BJ (cell line): ENCODE measurements at regions of chr4 and their contacts with region 1.

Region 1: DNA sequence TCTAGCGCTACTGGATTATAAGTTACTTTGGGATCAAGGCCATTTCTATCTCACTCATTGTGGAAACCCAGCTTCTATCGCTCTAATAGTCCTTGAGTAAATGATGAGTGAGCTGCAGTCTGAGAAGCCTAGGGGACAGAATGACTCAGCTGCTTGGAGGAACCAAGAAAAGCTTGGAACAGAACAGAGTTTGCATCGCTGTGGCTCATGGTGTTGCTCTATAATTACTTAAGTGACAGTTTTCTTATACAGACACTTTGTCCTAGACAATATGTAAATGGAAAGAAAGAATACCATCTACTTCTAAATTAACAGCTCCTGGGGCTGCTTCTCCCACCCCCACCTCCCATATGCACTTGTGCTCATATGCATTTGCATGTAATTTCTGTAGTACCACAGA is 156.9 kb downstream of the SLIT2 start:
- DNase-seq: no peak
- H3K4me3 ChIP-seq: no peak overlapping the region
- H3K27me3 ChIP-seq: no peaks in the 10 kb centered on the region
- CTCF ChIP-seq: no peak

Region 2: DNA sequence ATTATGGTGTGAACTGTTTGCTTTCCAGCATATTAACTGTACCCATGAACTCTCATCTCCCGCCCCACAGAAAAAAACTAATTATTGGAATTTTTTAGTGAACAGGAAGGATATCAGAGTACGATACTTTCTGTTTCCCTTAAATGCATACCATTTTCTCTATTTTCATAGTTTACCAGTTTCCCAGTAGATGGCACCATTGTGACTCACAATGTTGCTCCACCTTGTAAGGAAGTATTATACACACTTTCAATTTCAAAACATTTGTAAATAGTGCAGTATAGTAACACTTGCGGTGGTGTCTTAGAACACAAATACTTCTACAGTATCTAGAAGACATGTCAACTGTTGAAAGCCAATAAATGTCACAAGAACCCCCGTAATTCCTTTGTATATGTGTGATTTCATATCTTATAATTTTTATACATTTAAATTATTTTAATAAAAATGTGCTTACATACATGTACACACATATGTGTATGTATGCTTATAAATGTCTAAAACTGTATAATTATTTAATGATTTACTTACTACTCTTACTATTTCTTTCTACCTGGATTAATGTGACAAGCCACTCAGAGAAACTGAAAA is 10.3 kb after region 1 on chr4:
- CTCF ChIA-PET with region 1: interaction called, 10 read pairs
- POLR2A ChIA-PET with region 1: no interaction called
- DNase-seq: peak; percentile 20
- H3K4me3 ChIP-seq: 0 out of 2 replicates have a peak overlapping the region, but pooled peaks have one; percentile 12
- H3K27me3 ChIP-seq: no peaks in the 10 kb centered on the region
- CTCF ChIP-seq: peak; percentile 58